Naive thymus-derived CD8-positive, alpha-beta T cell (primary cell): ENCODE measurements at regions of chr14 and their contacts with region 1.

Region 1: GRCh38 chr14:39102969-39103957 is at the start of gene SEC23A:
- DNase-seq: peak; percentile 67 to 91 (median 74)
- ATAC-seq: peak; percentile 90 to 93
- H3K4me3 Mint-ChIP-seq: peak within 1 kb of the TSS; percentile 89 to 98 (median 96)
- H3K27ac Mint-ChIP-seq: peak within 1 kb of the TSS; percentile 93 to 99 (median 97)
- H3K4me1 Mint-ChIP-seq: peaks cover 20 to 57% (median 44%) of the 10 kb centered on the region in 4 donors
- H3K27me3 Mint-ChIP-seq: no peaks in the 10 kb centered on the region
- polyA plus RNA-seq, gene SEC23A: 21.0 to 28.5 (median 23.6) TPM

Region 2: DNA sequence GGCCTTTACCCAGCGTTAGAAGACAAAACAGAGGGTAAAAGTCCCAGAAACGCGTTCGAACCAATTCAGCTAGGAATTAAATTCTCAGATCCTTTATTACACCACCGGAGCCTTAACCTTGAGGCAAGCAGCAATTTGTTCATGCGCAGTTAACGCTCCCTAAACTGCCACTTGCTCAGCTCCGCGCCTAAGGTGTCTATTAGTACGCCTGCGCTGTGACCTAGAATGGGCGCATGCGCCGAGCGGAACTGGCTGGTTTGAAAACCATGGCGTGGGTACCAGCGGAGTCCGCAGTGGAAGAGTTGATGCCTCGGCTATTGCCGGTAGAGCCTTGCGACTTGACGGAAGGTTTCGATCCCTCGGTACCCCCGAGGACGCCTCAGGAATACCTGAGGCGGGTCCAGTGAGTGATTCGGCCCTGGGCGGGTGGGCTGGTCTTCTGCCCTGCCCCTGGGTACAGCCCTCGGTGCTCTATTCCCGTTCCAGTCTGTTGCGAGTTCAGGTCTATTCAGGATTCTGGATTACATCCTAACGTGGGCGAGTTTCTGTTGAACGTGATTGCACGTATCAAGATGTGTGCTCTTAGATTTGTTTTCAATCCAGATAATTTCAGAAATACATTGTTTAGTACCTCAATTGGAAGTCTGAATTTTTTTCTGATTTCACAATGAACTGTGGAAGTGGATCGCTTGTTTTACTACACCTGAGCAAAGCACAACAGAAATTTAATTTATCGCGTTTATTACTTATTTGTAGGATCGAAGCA is 11.0 kb after region 1 on chr14 and contains the start of gene GEMIN2:
- POLR2A ChIA-PET with region 1: interaction called, 43 read pairs
- DNase-seq: peak; percentile 87 to 97 (median 94)
- ATAC-seq: peak; percentile 97 to 98
- H3K4me3 Mint-ChIP-seq: peak within 1 kb of the TSS; percentile 94 to 99 (median 97)
- H3K27ac Mint-ChIP-seq: peak within 1 kb of the TSS; percentile 92 to 98 (median 97)
- H3K4me1 Mint-ChIP-seq: peaks cover 6 to 33% (median 19%) of the 10 kb centered on the region in 4 donors
- H3K27me3 Mint-ChIP-seq: no peaks in the 10 kb centered on the region
- polyA plus RNA-seq, gene GEMIN2: 10.5 to 17.0 (median 12.7) TPM

Region 3: GRCh38 chr14:39174560-39175444 is 71.5 kb after region 1 on chr14 and contains the start of gene PNN:
- POLR2A ChIA-PET with region 1: interaction called, 17 read pairs
- DNase-seq: peak; percentile 85 to 99 (median 98)
- ATAC-seq: peak; percentile 86 to 90
- H3K4me3 Mint-ChIP-seq: peak within 1 kb of the TSS; percentile 96 to 100 (median 98)
- H3K27ac Mint-ChIP-seq: peak within 1 kb of the TSS; percentile 98 to 100 (median 99)
- H3K4me1 Mint-ChIP-seq: peaks cover 14 to 54% (median 41%) of the 10 kb centered on the region in 4 donors
- H3K27me3 Mint-ChIP-seq: peaks cover 0 to 2% (median 0%) of the 10 kb centered on the region in 5 donors
- polyA plus RNA-seq, gene PNN: 15.4 to 24.2 (median 18.9) TPM